Activated naive CD4-positive, alpha-beta T cell treated with anti-CD3 and anti-CD28 coated beads, Interleukin-2, amount 10 ng/mL, durations not matched to agents 7 days and 5 days (primary cell): ENCODE measurements at regions of chr12 and their contacts with region 1.

Region 1: GRCh38 chr12:120649442-120650232 is 9.2 kb downstream of the CABP1 start:
- DNase-seq: no peak
- H3K4me3 Mint-ChIP-seq: peak overlapping the region; percentile 48
- H3K27ac Mint-ChIP-seq: no peak overlapping the region
- H3K4me1 Mint-ChIP-seq: peaks cover 14% of the 10 kb centered on the region
- H3K27me3 Mint-ChIP-seq: peaks cover 86% of the 10 kb centered on the region

Region 2: DNA sequence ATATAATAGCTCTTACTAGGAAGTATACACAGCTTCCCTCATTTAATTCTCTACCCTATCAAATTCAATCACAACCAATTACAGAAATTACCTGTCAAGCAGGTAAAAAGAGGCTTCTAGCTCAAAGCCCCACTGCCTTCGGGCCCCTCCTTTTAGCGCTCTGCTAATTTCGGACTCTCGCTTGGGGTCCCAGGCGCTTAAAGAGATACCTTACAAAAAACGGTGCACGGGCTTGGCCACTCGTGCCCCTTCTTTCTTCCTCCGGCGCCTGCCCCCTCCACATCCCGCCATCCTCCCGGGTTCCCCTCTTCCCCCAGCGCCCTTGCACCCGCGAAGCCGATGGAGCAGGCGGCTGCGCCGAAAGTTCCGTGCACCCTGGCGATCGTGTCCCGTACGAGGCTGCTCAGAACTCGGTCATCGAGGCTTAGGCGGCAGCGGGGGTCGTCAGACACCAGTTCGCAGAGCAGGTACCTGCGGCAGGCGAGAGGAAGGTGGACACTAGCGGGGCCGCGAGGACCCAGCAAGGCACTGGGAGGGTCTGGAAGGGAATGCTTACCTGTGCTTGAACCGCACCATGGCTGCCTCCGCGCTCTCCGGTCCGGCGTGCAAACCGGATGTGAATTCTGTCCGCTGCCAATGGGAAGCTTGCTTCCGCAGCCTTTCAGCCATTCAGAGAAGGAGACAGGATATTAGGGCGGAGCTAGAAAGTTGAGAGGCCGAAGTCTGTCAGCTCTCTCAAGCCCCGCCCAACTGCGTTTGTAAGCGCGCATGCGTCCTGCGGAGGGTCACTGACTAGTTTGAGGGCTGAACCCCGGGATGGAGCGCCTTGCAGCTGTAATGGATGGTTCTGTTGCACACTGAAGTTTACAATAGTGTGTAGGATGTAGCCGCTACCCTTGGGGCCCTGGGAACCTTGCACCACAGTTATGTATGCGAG is 68.6 kb before region 1 on chr12 and contains the start of gene POP5:
- CTCF ChIA-PET with region 1: interaction called, 24 read pairs
- DNase-seq: peak; percentile 97
- H3K4me3 Mint-ChIP-seq: peak within 1 kb of the TSS; percentile 99
- H3K27ac Mint-ChIP-seq: peak within 1 kb of the TSS; percentile 89
- H3K4me1 Mint-ChIP-seq: peaks cover 49% of the 10 kb centered on the region
- H3K27me3 Mint-ChIP-seq: peaks cover 33% of the 10 kb centered on the region

Region 3: DNA sequence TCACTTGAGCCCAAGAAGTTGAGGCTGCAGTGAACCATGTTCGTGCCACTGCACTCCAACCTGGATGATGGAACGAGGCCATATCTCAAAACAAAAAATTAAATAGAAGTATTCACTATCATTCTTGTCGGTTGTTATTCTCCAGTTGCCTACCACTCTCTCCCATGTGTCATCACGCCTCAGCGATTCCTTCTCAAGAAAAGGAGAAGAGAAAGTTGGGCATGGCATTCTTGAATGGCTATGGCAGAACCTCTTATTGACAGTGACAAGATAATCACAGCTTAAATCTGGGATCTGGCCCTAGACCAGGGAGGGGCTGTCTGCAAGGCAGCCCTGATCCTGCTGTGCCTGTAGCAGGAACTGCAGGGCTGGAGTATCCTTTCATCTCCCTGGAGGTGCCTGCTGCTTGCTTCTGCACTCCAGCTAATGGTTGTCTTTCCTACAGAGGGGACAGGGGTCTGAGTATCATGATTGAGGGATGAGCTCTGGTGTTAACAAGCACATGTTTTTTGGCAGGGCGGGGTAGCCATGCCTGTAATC is 24.5 kb after region 1 on chr12:
- CTCF ChIA-PET with region 1: interaction called, 15 read pairs
- DNase-seq: no peak
- H3K4me3 Mint-ChIP-seq: no peak overlapping the region
- H3K27ac Mint-ChIP-seq: no peak overlapping the region
- H3K4me1 Mint-ChIP-seq: peaks cover 16% of the 10 kb centered on the region
- H3K27me3 Mint-ChIP-seq: peaks cover 32% of the 10 kb centered on the region

Region 4: GRCh38 chr12:120686690-120687577 is 37.3 kb after region 1 on chr12 and contains the start of gene MLEC:
- CTCF ChIA-PET with region 1: interaction called, 45 read pairs
- DNase-seq: peak; percentile 99
- H3K4me3 Mint-ChIP-seq: peak within 1 kb of the TSS; percentile 90
- H3K27ac Mint-ChIP-seq: peak within 1 kb of the TSS; percentile 93
- H3K4me1 Mint-ChIP-seq: peaks cover 56% of the 10 kb centered on the region
- H3K27me3 Mint-ChIP-seq: no peaks in the 10 kb centered on the region

Region 5: GRCh38 chr12:120710031-120710804 is 60.6 kb after region 1 on chr12 and contains the start of gene UNC119B:
- CTCF ChIA-PET with region 1: interaction called, 50 read pairs
- DNase-seq: peak; percentile 83
- H3K4me3 Mint-ChIP-seq: peak within 1 kb of the TSS; percentile 83
- H3K27ac Mint-ChIP-seq: peak within 1 kb of the TSS; percentile 75
- H3K4me1 Mint-ChIP-seq: peaks cover 42% of the 10 kb centered on the region
- H3K27me3 Mint-ChIP-seq: no peaks in the 10 kb centered on the region

Region 6: DNA sequence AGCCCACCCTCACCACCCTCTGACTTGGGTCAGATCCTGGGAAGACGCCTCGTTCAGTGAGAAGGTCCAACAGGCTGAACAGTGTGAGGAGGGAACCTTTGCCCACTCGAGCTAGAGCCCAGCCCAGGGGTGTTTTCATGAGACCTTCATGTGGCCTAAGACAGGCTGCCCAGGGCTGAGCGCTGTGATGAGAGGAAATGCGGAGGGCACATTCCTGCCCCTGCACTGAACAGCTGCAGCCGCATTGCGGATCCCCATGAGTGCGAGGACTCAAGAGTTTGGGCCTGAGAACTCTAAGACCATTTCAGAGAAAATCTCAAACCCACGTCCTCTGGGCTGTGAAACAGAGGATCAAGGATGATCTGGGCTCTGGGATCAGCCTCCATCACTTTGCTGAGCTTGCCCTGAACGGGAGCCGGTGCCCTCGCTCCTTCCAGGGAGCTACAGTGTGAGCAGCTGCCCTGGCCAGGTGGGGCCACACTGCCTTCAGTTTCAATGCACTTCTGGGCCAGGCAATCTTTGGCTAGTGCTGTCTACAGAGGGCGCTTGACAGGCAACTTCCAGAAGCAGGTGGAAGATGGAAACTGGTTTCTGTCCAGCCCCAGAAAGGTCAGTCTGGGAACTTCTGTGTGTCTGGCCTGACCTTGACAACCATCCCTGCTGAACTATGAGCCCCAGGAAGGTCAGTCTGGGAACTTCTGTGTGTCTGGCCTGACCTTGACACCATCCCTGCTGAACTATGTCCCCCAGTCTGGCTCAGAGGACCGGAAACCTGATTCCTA is 439.6 kb after region 1 on chr12:
- CTCF ChIA-PET with region 1: no interaction called
- DNase-seq: no peak
- H3K4me3 Mint-ChIP-seq: no peak overlapping the region
- H3K27ac Mint-ChIP-seq: no peak overlapping the region
- H3K4me1 Mint-ChIP-seq: peaks cover 50% of the 10 kb centered on the region
- H3K27me3 Mint-ChIP-seq: peaks cover 5% of the 10 kb centered on the region